ENCODE measurements at regions of chr2 and their contacts with region 1.

Region 1: DNA sequence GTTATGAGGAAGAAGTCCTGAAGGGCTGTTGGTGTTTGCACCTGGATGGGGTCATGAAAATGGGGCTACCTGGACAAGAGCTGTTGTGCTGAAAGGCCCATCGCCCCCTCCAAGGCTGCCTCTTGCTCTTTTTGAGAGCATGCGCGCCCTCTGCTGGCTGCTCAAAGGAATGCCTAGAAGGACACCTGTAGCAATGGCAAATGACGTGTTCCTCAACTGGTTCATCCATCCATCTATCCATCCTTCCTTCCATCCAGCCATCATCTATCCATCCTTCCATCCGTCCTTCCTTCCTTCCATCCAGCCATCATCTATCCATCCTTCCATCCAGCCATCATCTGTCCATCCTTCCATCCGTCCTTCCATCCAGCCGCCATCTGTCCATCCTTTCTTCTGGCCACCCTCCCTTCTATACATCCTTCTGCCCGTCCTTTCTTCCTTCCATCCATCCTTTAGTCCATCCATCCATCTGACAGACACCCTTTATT is 17.2 kb upstream of the RPL31 start:
- DNase-seq: peak; percentile 58 to 76
- ATAC-seq: peak; percentile 79

Region 2: DNA sequence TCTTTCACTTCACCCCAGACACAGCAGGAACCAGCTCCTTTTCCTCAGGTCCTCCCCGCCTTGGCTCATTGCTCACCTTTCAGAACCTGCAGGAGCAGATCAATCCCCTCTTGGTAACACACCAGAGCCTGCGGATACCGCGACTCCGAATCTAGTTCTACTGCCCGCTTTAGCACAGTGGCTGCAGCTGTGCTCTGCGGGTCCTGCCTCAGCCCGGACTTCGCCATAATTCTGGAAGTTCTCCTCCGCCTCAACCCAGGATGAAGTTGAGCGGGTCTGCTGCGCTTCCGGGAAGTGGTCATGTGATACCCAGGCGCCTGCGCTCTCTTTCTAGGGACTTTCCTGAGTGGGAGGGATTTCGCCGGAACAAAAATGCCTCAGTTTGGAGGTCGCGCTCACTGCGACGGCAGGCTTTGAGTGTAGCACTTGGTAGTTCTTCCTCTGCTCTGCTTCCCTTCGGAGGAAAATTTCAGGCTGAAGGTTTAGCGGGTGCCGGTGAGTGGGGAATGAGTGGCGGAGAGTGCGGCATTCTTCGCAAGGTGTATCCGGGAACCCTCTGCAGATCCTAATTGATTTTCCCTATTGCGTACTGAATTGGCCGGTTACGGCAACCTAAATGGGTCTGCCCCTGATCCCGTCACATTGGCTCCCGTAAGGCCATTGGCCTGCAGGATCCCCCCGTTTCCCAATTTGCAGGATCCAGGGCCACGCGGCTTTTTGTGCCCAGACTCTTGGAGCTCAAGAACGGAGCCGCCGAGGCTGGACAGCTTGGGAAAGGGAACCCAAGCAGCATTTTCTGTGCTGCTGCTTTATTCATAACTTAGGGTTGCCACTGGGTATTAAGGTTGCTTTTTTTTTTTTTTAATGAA is 1803.9 kb before region 1 on chr2 and contains the starts of genes MITD1 and MRPL30:
- intact Hi-C with region 1: no loop called
- DNase-seq: peak; percentile 90 to 93
- ATAC-seq: peak; percentile 98
- total RNA-seq, gene MITD1: 18.2 to 19.4 TPM
- total RNA-seq, gene MRPL30: 22.3 to 23.5 TPM

Region 3: DNA sequence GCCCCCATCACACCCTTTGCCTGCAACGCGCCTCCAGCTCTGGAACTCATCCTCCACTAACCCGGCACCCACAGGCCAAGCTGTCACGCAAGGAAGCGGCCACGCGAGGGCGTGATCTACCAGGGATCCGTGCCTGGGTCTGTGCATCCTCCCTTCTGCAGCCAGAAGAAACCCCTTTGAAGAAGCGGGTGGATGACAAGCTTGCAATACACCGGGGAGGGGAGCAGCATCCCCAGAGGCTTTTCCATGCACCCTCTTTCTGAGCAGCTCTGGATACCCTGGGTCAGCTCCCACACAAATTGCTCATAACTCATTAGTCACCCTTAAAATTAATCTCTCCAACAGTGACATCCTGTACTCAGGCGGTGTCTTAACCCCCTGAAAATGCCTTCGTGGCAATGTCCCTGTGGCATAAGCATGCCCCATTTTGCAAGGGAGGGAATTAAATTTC is 374.5 kb before region 1 on chr2:
- intact Hi-C with region 1: loop called (anchors 5 to 10 kb)
- DNase-seq: peak in 1 of 2 donors; percentile 70
- ATAC-seq: peak; percentile 68

Region 4: DNA sequence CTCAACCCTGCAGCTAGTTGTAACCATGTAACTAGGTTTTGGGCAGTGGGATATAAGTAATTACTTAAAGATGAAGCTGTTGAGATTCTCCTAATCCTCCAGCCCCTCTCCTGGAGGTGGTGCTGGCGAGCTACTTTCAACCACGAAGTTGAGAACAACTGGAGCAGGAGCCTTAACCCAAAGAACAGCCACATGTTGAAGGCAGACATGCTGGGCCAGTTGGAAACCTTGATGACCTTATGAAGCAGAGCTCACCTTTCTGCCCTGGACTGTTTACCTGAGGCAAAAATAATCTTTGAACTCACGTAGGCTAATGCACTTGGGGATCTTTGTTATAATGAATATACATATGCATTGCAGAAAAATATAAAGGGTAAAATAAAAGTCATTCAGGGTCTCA is 254.6 kb before region 1 on chr2:
- intact Hi-C with region 1: loop called in 1 of 2 experiments (anchors 2 kb)
- DNase-seq: peak; percentile 50 to 72
- ATAC-seq: peak; percentile 95

Region 5: DNA sequence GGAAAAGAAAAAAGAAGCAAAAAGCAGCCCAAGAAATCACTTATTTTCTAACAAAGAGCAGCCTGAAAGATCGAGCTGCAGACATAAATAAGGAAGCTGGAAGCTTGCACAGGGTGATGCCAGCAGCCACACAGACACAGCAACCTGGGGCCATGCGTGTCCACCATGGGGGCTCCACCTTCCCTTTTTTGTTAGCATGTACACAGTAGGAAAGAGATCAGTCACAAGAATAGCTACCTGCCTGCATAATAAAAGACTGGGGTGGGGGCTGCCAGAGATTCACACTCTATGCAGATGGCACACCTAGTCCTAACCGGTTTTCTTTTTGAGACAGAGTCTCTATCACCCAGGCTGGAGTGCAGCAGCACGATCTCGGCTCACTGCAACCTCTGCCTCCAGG is 264.9 kb after region 1 on chr2:
- intact Hi-C with region 1: no loop called
- DNase-seq: no peak
- ATAC-seq: no peak

Region 6: GRCh38 chr2:101846973-101847372 is 862.0 kb after region 1 on chr2:
- intact Hi-C with region 1: no loop called
- DNase-seq: no peak
- ATAC-seq: no peak

Measured in left colon (tissue), 2 donors.